Left ventricle myocardium superior (tissue), 1 donor: ENCODE measurements at regions of chr5 and their contacts with region 1.

Region 1: GRCh38 chr5:57703721-57704120 is 221.1 kb upstream of the ACTBL2 start:
- DNase-seq: no peak
- ATAC-seq: no peak

Region 2: GRCh38 chr5:57550132-57550531 is 153.6 kb before region 1 on chr5:
- intact Hi-C with region 1: no loop called
- DNase-seq: no peak
- ATAC-seq: no peak

Region 3: GRCh38 chr5:57662991-57663390 is 40.7 kb before region 1 on chr5:
- intact Hi-C with region 1: loop called (anchors 5 kb)
- DNase-seq: no peak
- ATAC-seq: peak; percentile 89